K562 (cell line): ENCODE measurements at regions of chr2 and their contacts with region 1.

Region 1: DNA sequence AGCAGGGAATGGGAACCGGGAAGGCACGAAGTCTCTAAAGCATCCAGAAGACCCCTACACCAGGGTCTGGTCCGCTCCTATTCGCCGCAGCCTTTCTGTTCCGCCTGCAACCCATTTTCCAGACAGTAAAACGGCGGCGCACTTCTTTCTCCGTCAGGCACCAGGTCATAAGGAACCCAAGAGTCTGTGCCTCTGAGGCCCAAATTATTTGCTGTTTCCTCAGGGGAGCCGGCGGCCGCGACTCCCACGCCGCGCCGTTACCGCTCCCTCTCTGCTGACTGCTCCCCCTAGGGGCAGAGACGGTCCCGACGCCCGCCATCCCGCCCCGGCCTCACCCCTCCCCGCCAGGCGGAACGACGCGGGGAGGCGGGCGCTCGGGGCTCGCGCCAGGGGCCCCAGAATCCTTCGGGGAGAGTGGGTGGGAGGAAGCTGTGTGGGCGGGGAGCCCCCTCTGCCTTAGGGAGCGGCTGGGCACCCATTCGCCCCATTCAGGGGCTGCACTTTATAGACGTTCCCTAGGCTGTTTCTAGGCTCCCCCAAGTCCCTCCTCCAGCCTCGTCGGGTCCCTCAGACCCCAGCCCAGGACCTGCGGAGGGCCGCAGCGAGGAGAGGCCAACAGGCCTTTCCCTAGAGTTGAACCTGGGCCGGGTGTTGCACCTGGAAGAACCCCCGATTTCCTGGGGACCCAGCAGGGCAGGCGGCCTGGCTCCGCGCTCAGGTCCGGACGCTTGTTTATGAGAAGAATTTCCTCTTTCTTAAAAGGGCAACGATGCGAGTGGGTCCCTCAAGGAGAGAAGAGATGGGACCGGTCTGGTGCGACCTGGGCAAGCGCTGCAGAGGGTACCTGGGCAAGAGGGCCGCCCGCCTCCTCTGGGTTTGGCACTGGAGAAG is 3.6 kb upstream of the CTDSP1 start:
- DNase-seq: peak; percentile 78 to 95 (median 84)
- ATAC-seq: peak; percentile 71
- H3K4me3 ChIP-seq: peak overlapping the region; percentile 57
- H3K27ac ChIP-seq: peak overlapping the region; percentile 99
- H3K4me1 ChIP-seq: peaks cover 20 to 71% of the 10 kb centered on the region in 2 experiments
- H3K27me3 ChIP-seq: no peaks in the 10 kb centered on the region
- CTCF ChIP-seq: peak; percentile 73 to 79 (median 79)
- EP300 ChIP-seq: peak; percentile 52; the same call in 1 of the 2 replicates
- POLR2A ChIP-seq: peak; percentile 60; the same call in 1 of the 2 replicates
- RAD21 ChIP-seq: peak; percentile 62 to 82

Region 2: DNA sequence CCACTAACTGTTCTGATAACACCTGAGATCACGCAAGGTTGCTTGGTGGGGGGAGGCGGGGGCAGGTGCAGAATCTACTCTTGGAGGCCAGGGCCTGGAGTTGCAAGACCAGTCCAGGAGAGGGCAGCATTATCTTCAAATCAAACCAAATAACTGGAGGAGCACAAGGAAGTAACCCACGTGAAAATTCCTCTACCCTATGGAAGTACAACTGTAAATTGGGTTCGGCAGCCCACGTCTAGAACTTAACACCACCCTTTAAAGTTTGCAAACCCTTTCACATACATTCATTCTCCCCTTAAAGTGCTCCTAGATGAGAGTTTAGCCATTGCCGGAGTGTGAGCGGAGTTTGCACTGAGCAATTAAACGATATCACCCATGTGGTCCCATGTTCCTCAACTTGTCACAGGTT is 209.7 kb before region 1 on chr2:
- CTCF ChIA-PET with region 1: no interaction called
- POLR2A ChIA-PET with region 1: no interaction called
- in situ Hi-C with region 1: no loop called
- intact Hi-C with region 1: loop called (anchors 2 kb)
- DNase-seq: peak; percentile 66 to 78 (median 68)
- ATAC-seq: peak; percentile 96
- H3K4me3 ChIP-seq: no peak overlapping the region
- H3K27ac ChIP-seq: peak overlapping the region; percentile 31; the same call in 1 of the 3 replicates
- H3K4me1 ChIP-seq: peaks cover 0 to 8% of the 10 kb centered on the region in 2 experiments; a peak in 4 of 5 replicates
- H3K27me3 ChIP-seq: no peaks in the 10 kb centered on the region
- CTCF ChIP-seq: peak; percentile 73 to 79 (median 78)
- EP300 ChIP-seq: no peak
- POLR2A ChIP-seq: no peak
- RAD21 ChIP-seq: peak; percentile 57 to 67

Region 3: GRCh38 chr2:218286570-218287459 is 109.2 kb before region 1 on chr2:
- CTCF ChIA-PET with region 1: no interaction called
- POLR2A ChIA-PET with region 1: interaction called, 9 read pairs
- in situ Hi-C with region 1: loop called (anchors 5 kb)
- intact Hi-C with region 1: loop called (anchors 2 kb)
- DNase-seq: peak; percentile 71 to 93 (median 77)
- ATAC-seq: peak; percentile 84
- H3K4me3 ChIP-seq: peak overlapping the region; percentile 14
- H3K27ac ChIP-seq: peak overlapping the region; percentile 88
- H3K4me1 ChIP-seq: peaks cover 35 to 50% of the 10 kb centered on the region in 2 experiments
- H3K27me3 ChIP-seq: no peaks in the 10 kb centered on the region
- CTCF ChIP-seq: no peak
- EP300 ChIP-seq: peak; percentile 6; the same call in 1 of the 2 replicates
- POLR2A ChIP-seq: peak; percentile 87
- RAD21 ChIP-seq: no peak

Region 4: DNA sequence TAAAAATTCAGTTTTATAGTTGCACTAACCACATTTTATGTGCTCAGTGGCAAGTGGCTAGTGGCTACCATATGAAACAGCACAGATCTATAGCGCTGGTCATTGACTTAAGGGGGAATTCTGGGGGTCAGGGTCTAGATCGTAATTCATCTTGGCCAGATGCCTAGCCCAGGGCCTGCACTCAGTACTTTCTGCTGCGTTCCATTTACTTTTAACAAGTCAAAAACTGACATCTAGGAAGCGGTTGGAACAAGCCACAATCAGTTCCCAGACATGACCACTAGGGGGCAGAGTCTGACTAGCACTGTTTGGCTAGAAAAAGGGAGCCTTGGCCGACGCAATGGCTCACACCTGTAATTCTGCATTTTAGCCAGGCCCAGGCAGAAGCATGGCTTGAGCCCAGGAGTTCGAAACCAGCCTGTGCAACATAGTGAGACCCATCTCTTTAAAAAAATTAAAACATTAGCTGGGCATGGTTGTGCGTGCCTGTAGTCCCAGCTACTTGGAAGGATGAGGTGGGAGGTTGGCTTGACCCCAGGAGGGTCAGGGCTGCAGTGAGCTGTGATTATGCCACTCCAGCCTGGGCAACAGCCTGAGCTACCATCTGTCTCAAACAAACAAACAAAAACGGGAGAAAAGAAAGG is 94.7 kb before region 1 on chr2:
- CTCF ChIA-PET with region 1: interaction called, 10 read pairs
- POLR2A ChIA-PET with region 1: interaction called, 8 read pairs
- in situ Hi-C with region 1: no loop called
- intact Hi-C with region 1: loop called (anchors 1 kb)
- DNase-seq: peak; percentile 38 to 89 (median 47)
- ATAC-seq: peak; percentile 91
- H3K4me3 ChIP-seq: no peak overlapping the region
- H3K27ac ChIP-seq: peak overlapping the region; percentile 59
- H3K4me1 ChIP-seq: peaks cover 0 to 10% of the 10 kb centered on the region in 2 experiments; a peak in 3 of 5 replicates
- H3K27me3 ChIP-seq: no peaks in the 10 kb centered on the region
- CTCF ChIP-seq: peak; percentile 84 to 92 (median 86)
- EP300 ChIP-seq: no peak
- POLR2A ChIP-seq: no peak
- RAD21 ChIP-seq: peak; percentile 93 to 94

Region 5: GRCh38 chr2:218367415-218368153 is 28.5 kb before region 1 on chr2:
- CTCF ChIA-PET with region 1: no interaction called
- POLR2A ChIA-PET with region 1: interaction called, 4 read pairs
- in situ Hi-C with region 1: no loop called
- intact Hi-C with region 1: loop called (anchors 2 kb)
- DNase-seq: peak; percentile 90 to 92 (median 92)
- ATAC-seq: peak; percentile 99
- H3K4me3 ChIP-seq: peak overlapping the region; percentile 56
- H3K27ac ChIP-seq: peak overlapping the region; percentile 89
- H3K4me1 ChIP-seq: peaks cover 6 to 25% of the 10 kb centered on the region in 2 experiments; a peak in 4 of 5 replicates
- H3K27me3 ChIP-seq: no peaks in the 10 kb centered on the region
- CTCF ChIP-seq: peak in 2 of 3 experiments; percentile 16 to 28; a peak in 2 of 6 replicates
- EP300 ChIP-seq: 0 out of 2 replicates have a peak, but pooled peaks have one; percentile 10
- POLR2A ChIP-seq: peak; percentile 94
- RAD21 ChIP-seq: 0 out of 4 replicates have a peak, but pooled peaks of 1 of the 2 experiments have one; percentile 7

Region 6: GRCh38 chr2:218568190-218569037 is 172.4 kb after region 1 on chr2 and contains the starts of genes CNOT9 and USP37:
- CTCF ChIA-PET with region 1: no interaction called
- POLR2A ChIA-PET with region 1: no interaction called
- in situ Hi-C with region 1: no loop called
- intact Hi-C with region 1: loop called (anchors 5 kb)
- DNase-seq: peak; percentile 88 to 96 (median 92)
- ATAC-seq: peak; percentile 91
- H3K4me3 ChIP-seq: peak within 1 kb of the TSS; percentile 77
- H3K27ac ChIP-seq: peak within 1 kb of the TSS; percentile 94
- H3K4me1 ChIP-seq: peaks cover 8 to 9% of the 10 kb centered on the region in 2 experiments; a peak in 4 of 5 replicates
- H3K27me3 ChIP-seq: no peaks in the 10 kb centered on the region
- CTCF ChIP-seq: no peak
- EP300 ChIP-seq: peak; percentile 20; the same call in 1 of the 2 replicates
- POLR2A ChIP-seq: peak; percentile 70
- RAD21 ChIP-seq: no peak
- polyA plus RNA-seq, gene CNOT9: 19.0 to 27.4 TPM
- polyA plus RNA-seq, gene USP37: 2.0 to 2.8 TPM